AG04450 (cell line): ENCODE measurements at regions of chr19 and their contacts with region 1.

Region 1: DNA sequence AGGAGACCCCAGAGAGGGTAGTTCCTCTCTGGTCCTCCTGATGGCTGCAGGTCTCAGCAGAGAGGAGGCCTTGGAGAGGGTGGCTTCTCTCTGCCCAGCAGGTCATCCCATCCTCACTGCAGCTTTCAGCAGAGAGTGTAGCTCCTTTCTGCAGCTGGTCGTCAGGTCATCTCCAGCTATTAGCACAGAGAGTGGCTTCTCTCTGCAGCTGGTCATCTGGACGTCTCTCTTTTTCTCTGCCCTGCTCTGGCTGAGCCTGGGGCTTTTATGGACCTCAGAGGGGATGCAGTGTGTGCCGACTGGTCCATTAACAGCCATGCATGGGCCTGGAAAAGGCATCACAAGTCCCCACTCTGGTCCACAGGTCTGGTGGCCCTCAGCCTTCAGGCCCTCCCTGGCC is 20.3 kb downstream of the TNFSF9 start:
- DNase-seq: no peak
- H3K4me3 ChIP-seq: no peak overlapping the region
- H3K27ac ChIP-seq: no peak overlapping the region
- H3K27me3 ChIP-seq: no peaks in the 10 kb centered on the region
- CTCF ChIP-seq: no peak

Region 2: DNA sequence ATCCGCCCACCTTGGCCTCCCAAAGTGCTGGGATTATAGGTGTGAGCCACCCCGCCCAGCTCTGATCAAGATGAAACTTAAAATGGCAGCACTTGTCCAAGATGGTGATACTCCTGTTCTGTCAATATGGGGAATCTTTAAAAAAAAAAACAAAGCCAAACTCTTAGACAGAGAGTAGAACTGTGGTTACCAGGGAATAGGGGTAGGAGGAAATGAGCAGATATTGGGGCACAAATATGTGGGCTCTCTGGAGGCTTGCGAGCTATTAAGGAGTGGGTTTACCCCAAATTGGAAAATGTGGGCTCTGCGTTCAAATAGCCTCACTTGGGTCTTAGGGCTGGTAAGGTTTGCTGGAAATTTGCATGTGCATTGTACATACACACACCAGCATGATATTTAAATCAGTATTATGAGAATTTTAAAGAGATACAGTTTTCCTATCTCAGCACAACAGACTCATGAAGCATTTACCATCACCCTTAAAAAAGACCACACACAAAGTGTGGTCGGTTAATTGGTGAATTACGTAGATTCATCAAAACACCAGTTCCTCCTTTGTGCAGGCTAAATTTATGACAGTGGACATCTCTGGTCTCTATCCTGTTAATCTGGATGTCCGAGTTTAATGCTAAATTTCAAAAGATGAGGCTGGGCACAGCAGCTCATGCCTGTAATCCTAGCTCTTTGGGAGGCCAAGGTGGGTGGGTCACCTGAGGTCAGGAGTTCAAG is 28.5 kb after region 1 on chr19:
- CTCF ChIA-PET with region 1: no interaction called
- POLR2A ChIA-PET with region 1: interaction called, 11 read pairs
- DNase-seq: no peak
- H3K4me3 ChIP-seq: no peak overlapping the region
- H3K27ac ChIP-seq: no peak overlapping the region
- H3K27me3 ChIP-seq: no peaks in the 10 kb centered on the region
- CTCF ChIP-seq: no peak